Activated CD4-positive, alpha-beta memory T cell treated with anti-CD3 and anti-CD28 coated beads for 36 hours (primary cell): ENCODE measurements at regions of chr2 and their contacts with region 1.

Region 1: DNA sequence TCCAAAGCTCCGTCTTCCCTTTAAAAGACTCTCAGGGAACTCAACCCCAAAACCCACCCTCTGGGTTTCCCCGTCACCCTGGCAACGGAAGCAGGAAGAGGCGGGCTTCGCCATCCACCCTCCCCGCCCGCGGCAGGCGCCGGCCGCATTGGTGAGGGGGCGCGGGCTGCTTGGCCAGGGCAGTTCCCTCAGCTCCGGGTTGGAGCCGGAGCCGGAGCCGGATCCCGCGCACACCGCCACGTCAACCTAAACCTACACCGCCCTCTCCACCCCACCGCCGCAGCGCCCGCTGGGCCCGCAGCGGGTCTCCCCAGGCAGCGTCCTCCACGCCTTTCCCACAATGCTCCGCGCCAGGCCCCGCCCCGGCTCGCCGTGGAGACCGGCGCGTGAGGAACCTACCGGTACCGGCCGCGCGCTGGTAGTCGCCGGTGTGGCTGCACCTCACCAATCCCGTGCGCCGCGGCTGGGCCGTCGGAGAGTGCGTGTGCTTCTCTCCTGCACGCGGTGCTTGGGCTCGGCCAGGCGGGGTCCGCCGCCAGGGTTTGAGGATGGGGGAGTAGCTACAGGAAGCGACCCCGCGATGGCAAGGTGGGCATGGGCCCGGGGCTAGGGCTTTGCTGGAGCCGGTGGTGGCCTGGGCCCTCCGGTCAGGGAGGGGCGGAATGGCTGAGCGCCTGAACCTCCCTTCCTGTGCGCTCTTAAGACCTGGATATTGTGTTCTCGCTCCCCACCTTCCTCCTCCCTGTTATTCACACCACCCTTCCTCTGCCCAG is at the start of gene DNAJC10:
- DNase-seq: peak; percentile 91
- H3K4me3 Mint-ChIP-seq: no peak within 1 kb of the TSS
- H3K27ac Mint-ChIP-seq: no peak within 1 kb of the TSS
- H3K4me1 Mint-ChIP-seq: no peaks in the 10 kb centered on the region
- H3K27me3 Mint-ChIP-seq: peaks cover under 1% of the 10 kb centered on the region
- total RNA-seq, gene DNAJC10: 59.0 to 63.6 TPM

Region 2: DNA sequence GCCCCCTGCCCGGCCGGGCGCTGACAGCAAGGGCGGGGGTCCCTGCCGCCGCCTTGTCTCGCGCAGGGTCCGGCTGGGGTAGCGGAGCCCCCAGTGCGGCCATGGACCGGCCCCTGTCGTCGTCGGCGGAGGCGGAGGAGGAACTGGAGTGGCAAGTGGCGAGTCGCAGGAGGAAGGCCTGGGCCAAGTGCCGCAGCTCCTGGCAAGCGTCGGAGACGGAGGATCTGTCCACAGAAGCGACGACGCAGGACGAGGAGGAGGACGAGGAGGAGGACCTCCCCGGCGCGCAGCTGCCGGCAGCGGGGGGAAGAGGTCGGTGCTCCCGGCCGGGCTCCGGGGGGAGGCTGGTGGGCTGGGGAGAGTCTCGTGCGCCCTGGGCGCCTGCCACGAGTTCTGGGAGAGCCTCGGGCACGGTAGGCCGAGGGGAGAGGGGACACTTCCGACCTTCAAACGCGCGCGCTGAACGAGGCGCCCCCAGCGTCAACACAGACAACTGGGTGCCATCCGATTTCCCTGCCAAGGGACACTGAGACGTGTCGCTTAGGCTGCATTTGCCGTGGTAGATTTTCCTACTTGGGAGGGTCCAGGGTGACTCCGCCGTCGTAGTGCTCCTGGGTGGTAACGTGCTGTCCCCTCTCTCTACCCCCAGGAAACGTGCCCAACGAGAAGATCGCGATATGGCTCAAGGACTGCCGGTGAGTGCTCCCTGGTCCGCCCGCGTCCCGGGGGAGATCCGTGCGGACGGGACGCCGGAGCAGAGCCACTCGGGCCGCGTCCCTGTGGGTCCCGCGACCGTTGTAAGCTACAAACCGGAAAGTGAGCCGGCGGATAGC is 823.9 kb before region 1 on chr2:
- CTCF ChIA-PET with region 1: no interaction called
- POLR2A ChIA-PET with region 1: no interaction called
- intact Hi-C with region 1: loop called (anchors 5 kb)
- DNase-seq: peak; percentile 68
- H3K4me3 Mint-ChIP-seq: peak overlapping the region; percentile 96
- H3K27ac Mint-ChIP-seq: peak overlapping the region; percentile 77
- H3K4me1 Mint-ChIP-seq: peaks cover 23% of the 10 kb centered on the region
- H3K27me3 Mint-ChIP-seq: peaks cover 7% of the 10 kb centered on the region

Region 3: DNA sequence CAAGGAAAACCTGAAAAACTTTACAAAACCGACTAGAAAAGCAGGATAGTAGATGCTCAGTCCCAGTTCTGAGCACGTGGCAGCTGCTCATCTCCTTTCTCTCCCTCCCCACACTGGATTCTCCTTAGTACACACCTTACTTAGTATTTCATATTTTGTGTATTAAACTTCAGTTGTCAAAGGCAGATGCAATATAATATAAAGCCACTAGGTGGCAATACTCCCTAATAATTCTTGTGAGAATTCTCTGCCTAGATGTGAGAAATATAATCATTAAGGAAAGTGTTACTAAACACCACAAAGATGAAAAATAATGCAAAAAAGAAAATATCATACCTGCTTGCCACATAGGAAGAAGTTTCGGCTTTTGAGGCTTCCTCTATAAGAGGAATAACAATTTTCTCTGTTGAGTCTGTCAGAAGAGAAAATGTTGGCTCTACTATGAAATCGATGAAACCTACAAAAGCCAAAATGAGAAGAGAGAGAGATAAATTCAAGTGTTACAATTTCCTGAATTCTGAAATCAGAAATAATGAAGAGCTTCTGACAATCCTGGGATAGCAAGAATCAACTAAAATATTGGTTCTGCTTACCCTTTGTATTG is 529.8 kb before region 1 on chr2:
- CTCF ChIA-PET with region 1: no interaction called
- POLR2A ChIA-PET with region 1: no interaction called
- intact Hi-C with region 1: loop called (anchors 5 kb)
- DNase-seq: no peak
- H3K4me3 Mint-ChIP-seq: no peak overlapping the region
- H3K27ac Mint-ChIP-seq: no peak overlapping the region
- H3K4me1 Mint-ChIP-seq: no peaks in the 10 kb centered on the region
- H3K27me3 Mint-ChIP-seq: peaks cover 5% of the 10 kb centered on the region

Region 4: DNA sequence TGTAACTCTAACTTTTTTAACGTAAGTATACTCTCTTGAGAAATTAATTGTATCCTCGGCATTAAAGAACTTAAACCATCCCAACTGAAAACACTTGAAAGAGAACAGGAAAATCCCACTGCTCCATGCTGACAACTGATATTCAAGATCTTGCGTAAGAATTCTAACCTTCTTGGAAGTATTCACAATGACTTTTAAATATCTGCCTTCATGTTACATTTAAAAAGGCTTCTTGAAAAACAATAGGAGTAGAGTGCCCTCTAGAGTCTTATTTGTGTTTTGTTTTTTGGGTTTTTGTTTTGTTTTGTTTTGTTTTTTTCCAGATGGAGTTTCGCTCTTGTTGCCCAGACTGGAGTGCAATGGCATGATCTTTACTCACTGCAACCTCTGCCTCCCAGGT is 65.4 kb before region 1 on chr2:
- CTCF ChIA-PET with region 1: no interaction called
- POLR2A ChIA-PET with region 1: no interaction called
- intact Hi-C with region 1: loop called (anchors 2 kb)
- DNase-seq: no peak
- H3K4me3 Mint-ChIP-seq: no peak overlapping the region
- H3K27ac Mint-ChIP-seq: no peak overlapping the region
- H3K4me1 Mint-ChIP-seq: peaks cover 10% of the 10 kb centered on the region
- H3K27me3 Mint-ChIP-seq: peaks cover 3% of the 10 kb centered on the region

Region 5: GRCh38 chr2:182666674-182667314 is 49.3 kb before region 1 on chr2:
- CTCF ChIA-PET with region 1: interaction called, 11 read pairs
- POLR2A ChIA-PET with region 1: no interaction called
- intact Hi-C with region 1: loop called (anchors 1 kb)
- DNase-seq: no peak
- H3K4me3 Mint-ChIP-seq: no peak overlapping the region
- H3K27ac Mint-ChIP-seq: no peak overlapping the region
- H3K4me1 Mint-ChIP-seq: peaks cover 4% of the 10 kb centered on the region
- H3K27me3 Mint-ChIP-seq: peaks cover 2% of the 10 kb centered on the region

Region 6: GRCh38 chr2:183038341-183039300 is 322.5 kb after region 1 on chr2 and contains the start of gene NCKAP1:
- CTCF ChIA-PET with region 1: no interaction called
- POLR2A ChIA-PET with region 1: no interaction called
- intact Hi-C with region 1: loop called (anchors 2 kb)
- DNase-seq: peak; percentile 90
- H3K4me3 Mint-ChIP-seq: peak within 1 kb of the TSS; percentile 78
- H3K27ac Mint-ChIP-seq: peak within 1 kb of the TSS; percentile 51
- H3K4me1 Mint-ChIP-seq: peaks cover 28% of the 10 kb centered on the region
- H3K27me3 Mint-ChIP-seq: peaks cover 35% of the 10 kb centered on the region
- total RNA-seq, gene NCKAP1: 18.8 to 21.7 TPM

Region 7: GRCh38 chr2:183124222-183124956 is 408.3 kb after region 1 on chr2 and contains the start of gene NUP35:
- CTCF ChIA-PET with region 1: no interaction called
- POLR2A ChIA-PET with region 1: no interaction called
- intact Hi-C with region 1: loop called (anchors 1 kb)
- DNase-seq: peak; percentile 90
- H3K4me3 Mint-ChIP-seq: peak within 1 kb of the TSS; percentile 94
- H3K27ac Mint-ChIP-seq: peak within 1 kb of the TSS; percentile 97
- H3K4me1 Mint-ChIP-seq: peaks cover 30% of the 10 kb centered on the region
- H3K27me3 Mint-ChIP-seq: peaks cover under 1% of the 10 kb centered on the region
- total RNA-seq, gene NUP35: 27.6 to 31.7 TPM